Heart left ventricle (tissue), 16 donors: ENCODE measurements at regions of chr4 and their contacts with region 1.

Region 1: GRCh38 chr4:183700404-183700803 is 41.3 kb downstream of the TRAPPC11 start:
- DNase-seq: no peak
- ATAC-seq: no peak
- H3K4me3 ChIP-seq: no peak overlapping the region
- H3K27ac ChIP-seq: no peak overlapping the region
- H3K4me1 ChIP-seq: no peaks in the 10 kb centered on the region
- H3K27me3 ChIP-seq: no peaks in the 10 kb centered on the region
- CTCF ChIP-seq: no peak
- POLR2A ChIP-seq: no peak

Region 2: DNA sequence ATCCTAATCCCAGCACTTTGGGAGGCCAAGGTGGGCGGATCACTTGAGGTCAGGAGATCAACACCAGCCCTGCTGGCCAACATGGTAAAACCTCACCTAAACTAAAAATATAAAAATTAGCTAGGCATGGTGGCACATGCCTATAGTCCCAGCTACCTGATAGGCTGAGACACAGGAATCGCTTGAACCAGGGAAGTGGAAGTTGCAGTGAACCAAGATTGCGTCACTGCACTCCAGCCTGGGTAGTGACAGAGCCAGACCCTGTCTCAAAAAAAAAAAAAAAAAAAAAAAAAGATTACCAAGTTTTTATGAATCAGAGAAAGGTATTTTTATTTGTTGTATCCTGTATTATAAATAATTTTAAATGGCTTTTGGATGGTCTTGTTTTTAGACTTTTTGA is 26.3 kb before region 1 on chr4:
- intact Hi-C with region 1: loop called in 1 of 10 experiments (anchors 5 kb)
- DNase-seq: no peak
- ATAC-seq: no peak
- H3K4me3 ChIP-seq: no peak overlapping the region
- H3K27ac ChIP-seq: no peak overlapping the region
- H3K4me1 ChIP-seq: no peaks in the 10 kb centered on the region
- H3K27me3 ChIP-seq: no peaks in the 10 kb centered on the region
- CTCF ChIP-seq: no peak
- POLR2A ChIP-seq: no peak